ENCODE measurements at regions of chr9 and their contacts with region 1.

Region 1: DNA sequence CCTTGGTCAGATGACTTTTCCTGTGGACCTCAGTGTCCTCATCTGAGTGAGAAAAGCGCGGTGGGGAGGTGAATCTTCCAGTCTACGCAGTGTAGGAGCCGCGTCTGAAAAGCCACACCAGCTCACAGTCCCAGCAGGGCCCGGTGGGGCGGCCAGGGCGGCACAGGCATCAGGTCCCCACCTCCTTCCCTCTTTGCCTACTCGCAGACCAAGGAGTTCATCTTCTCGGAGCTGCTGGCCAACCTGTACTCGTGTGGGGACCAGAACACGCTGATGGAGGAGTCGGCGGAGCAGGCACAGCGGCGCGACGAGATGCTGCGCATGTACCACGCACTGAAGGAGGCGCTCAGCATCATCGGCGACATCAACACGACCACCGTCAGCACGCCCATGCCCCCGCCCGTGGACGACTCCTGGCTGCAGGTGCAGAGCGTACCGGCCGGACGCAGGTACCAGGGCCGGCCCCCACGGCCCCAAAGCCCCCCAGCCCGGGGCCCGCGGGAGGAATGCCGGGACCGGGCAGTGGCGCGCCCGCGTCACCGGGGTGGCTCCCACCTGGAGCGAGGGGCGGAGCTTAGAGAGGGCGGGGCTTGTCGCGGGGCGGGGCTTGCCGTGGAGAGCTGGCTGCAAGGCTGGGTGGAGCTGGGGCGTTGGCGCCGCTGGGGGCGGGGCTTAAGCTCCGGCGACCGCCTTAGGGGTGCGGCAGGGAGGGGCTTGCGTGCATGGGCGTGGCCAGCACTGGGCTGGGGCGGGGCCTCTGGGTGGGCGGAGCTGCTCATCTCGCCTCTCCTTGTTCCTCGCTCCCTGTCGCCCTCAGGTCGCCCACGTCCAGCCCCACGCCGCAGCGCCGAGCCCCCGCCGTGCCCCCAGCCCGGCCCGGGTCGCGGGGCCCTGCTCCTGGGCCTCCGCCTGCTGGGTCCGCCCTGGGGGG is 25.6 kb downstream of the GOLGA2 start:
- DNase-seq: peak; percentile 94
- H3K4me3 Mint-ChIP-seq: peak overlapping the region; percentile 78
- H3K27ac Mint-ChIP-seq: no peak overlapping the region
- H3K4me1 Mint-ChIP-seq: peaks cover 5% of the 10 kb centered on the region
- H3K27me3 Mint-ChIP-seq: peaks cover 28% of the 10 kb centered on the region

Region 2: DNA sequence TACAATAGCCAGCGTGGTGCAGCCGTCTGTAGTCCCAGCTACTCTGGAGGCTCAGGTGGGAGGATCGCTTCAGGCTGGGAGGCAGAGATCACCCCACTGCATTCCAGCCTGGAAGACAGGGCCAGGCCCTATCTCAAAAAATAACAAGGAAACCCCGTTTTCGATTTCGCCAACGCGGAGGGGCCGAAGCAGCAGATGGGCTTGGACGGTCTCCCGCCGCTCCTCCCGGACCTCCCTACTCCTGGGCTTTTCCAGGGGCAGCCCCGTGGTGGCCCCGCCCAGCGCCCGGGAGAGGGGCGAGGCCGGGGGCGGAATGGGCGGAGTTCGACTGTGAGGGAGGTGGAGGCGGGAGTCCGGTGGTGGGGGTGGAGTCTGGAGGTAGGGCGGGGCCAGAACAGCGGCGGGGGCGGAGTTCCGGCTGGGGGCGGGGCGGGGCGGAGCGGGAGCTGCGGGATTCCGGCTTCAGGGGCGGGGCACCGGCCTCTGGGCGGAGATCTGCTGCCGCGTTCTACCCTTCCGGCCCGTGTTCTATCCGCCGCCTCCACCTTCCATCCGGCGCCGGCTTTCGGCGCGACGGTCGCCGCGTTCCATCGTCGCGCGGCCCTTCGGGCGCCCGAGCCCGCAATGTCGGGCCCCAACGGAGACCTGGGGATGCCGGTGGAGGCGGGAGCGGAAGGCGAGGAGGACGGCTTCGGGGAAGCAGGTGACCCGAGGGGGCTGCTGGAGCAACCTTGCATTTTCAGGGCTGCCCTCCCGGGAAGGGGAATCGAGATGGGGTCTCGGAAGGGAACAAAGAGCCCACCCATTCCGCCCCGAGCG is 90.2 kb before region 1 on chr9 and contains the start of gene BBLN:
- intact Hi-C with region 1: loop called (anchors 1 kb)
- DNase-seq: peak; percentile 88
- H3K4me3 Mint-ChIP-seq: peak within 1 kb of the TSS; percentile 84
- H3K27ac Mint-ChIP-seq: peak within 1 kb of the TSS; percentile 93
- H3K4me1 Mint-ChIP-seq: peaks cover 14% of the 10 kb centered on the region
- H3K27me3 Mint-ChIP-seq: peaks cover 2% of the 10 kb centered on the region
- total RNA-seq, gene BBLN: 97.3 and 106 TPM in 2 replicates

Region 3: DNA sequence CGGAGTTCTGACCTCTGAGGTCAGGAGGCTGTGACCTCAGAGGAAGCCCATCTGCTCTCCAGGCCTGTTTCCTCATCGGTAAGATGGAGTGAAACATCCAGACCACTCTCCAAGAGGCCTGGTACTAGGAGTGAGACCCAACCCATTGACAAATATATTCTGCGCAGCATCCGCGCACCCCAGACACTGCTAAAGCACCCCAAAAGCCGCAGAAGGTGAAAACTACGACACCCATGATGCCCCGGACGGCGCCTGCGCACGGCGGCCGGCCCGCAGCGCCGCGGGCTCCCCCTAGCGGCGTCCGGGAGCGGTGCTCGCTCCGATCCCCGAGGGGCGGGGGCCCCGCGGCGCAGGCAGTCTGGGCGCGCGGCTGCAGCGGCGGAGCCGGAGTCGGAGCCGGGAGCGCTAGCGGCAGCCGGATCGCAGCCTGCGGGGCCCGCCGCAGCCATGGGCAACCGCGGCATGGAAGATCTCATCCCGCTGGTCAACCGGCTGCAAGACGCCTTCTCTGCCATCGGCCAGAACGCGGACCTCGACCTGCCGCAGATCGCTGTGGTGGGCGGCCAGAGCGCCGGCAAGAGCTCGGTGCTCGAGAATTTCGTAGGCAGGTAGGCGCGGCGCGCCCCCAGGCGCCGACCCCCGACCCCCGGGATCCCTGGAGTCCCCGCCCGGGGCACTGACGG is 47.0 kb before region 1 on chr9 and contains the start of gene DNM1:
- intact Hi-C with region 1: loop called (anchors 1 kb)
- DNase-seq: peak; percentile 75
- H3K4me3 Mint-ChIP-seq: peak within 1 kb of the TSS; percentile 78
- H3K27ac Mint-ChIP-seq: peak within 1 kb of the TSS; percentile 83
- H3K4me1 Mint-ChIP-seq: peaks cover 21% of the 10 kb centered on the region
- H3K27me3 Mint-ChIP-seq: peaks cover 27% of the 10 kb centered on the region
- total RNA-seq, gene DNM1: 1.4 and 1.8 TPM in 2 replicates

Region 4: DNA sequence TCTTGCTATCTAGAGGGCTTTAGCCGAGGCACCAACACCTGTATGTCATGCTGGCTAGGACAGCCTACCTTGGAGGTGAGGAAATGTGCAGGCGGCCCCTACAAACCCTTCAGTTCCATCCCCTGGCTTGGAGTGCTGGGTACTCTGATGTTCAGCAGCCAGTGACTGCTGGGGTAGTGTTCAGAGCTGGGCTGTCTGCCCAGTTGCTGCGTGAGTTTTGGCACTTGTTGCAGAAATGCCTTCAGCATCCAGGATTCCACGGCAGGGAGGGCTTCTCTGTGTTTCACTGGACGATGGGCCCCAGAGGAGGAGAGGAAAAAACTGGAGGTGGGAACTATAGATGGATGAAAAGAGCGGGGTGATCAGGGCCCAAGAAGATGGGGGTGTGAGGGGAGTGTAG is 36.3 kb after region 1 on chr9:
- intact Hi-C with region 1: no loop called
- DNase-seq: no peak
- H3K4me3 Mint-ChIP-seq: no peak overlapping the region
- H3K27ac Mint-ChIP-seq: no peak overlapping the region
- H3K4me1 Mint-ChIP-seq: no peaks in the 10 kb centered on the region
- H3K27me3 Mint-ChIP-seq: no peaks in the 10 kb centered on the region

Region 5: GRCh38 chr9:128339771-128340690 is 89.9 kb after region 1 on chr9 and contains the start of gene SLC27A4:
- intact Hi-C with region 1: loop called (anchors 1 kb)
- DNase-seq: peak; percentile 82
- H3K4me3 Mint-ChIP-seq: peak within 1 kb of the TSS; percentile 94
- H3K27ac Mint-ChIP-seq: peak within 1 kb of the TSS; percentile 88
- H3K4me1 Mint-ChIP-seq: peaks cover 6% of the 10 kb centered on the region
- H3K27me3 Mint-ChIP-seq: no peaks in the 10 kb centered on the region
- total RNA-seq, gene SLC27A4: 41.8 and 43.2 TPM in 2 replicates

Region 6: GRCh38 chr9:129028192-129028957 is 778.2 kb after region 1 on chr9 and contains the start of gene SH3GLB2:
- intact Hi-C with region 1: loop called (anchors 1 kb)
- DNase-seq: peak; percentile 85
- H3K4me3 Mint-ChIP-seq: peak within 1 kb of the TSS; percentile 91
- H3K27ac Mint-ChIP-seq: peak within 1 kb of the TSS; percentile 80
- H3K4me1 Mint-ChIP-seq: peaks cover 24% of the 10 kb centered on the region
- H3K27me3 Mint-ChIP-seq: no peaks in the 10 kb centered on the region
- total RNA-seq, gene SH3GLB2: 71.1 and 74.8 TPM in 2 replicates

Measured in activated T-helper 1 cell treated with anti-CD3 and anti-CD28 coated beads, Interleukin-12 subunit alpha, Interleukin-12 subunit beta, Interleukin-2, Interleukin-4 antibody, amounts not matched to agents 30 ng/mL and 10 ng/mL and 1 ng/mL, durations not matched to agents 14 hours and 24 hours and 36 hours (primary cell).